Lower leg skin (tissue), 4 donors: ENCODE measurements at regions of chr5 and their contacts with region 1.

Region 1: GRCh38 chr5:6457592-6457991 is 8.9 kb downstream of the UBE2QL1 start:
- DNase-seq: no peak
- H3K4me3 ChIP-seq: no peak overlapping the region
- CTCF ChIP-seq: no peak
- POLR2A ChIP-seq: no peak

Region 2: GRCh38 chr5:6401410-6401809 is 56.2 kb before region 1 on chr5:
- intact Hi-C with region 1: loop called (anchors 1 kb)
- DNase-seq: peak in 1 of 2 donors; percentile 56
- H3K4me3 ChIP-seq: no peak overlapping the region
- CTCF ChIP-seq: no peak
- POLR2A ChIP-seq: no peak

Region 3: DNA sequence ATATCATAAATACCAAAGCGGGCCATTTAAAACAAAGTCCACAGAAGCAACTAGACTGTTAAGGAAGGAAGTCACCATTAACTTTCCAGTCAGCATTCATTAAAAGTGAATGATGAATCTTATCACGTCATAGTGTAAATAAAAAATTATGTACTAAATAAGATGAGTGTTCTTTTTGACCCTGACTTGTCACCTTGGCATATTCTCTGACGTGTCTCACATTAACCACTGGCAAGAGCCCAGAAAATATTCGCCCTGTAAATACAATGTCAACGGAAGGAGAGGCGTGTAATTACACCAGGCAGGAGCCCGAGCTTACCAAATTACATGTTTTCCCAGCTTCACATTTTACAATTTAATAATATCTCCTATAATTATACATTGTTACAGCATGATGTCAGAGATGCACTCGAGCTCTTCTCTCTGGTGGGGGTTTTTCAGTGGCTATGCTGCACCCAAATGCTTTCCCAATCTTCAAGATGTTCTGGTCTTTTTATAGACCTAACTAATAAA is 38.2 kb before region 1 on chr5:
- intact Hi-C with region 1: no loop called
- DNase-seq: no peak
- H3K4me3 ChIP-seq: no peak overlapping the region
- CTCF ChIP-seq: no peak
- POLR2A ChIP-seq: no peak